Mammary epithelial cell (primary cell): ENCODE measurements at regions of chr2 and their contacts with region 1.

Region 1: GRCh38 chr2:235534678-235535422 is 41.0 kb downstream of the AGAP1 start:
- DNase-seq: no peak
- H3K4me3 ChIP-seq: no peak overlapping the region
- H3K27ac ChIP-seq: no peak overlapping the region
- H3K4me1 ChIP-seq: peaks cover 3% of the 10 kb centered on the region
- H3K27me3 ChIP-seq: no peaks in the 10 kb centered on the region
- CTCF ChIP-seq: no peak

Region 2: DNA sequence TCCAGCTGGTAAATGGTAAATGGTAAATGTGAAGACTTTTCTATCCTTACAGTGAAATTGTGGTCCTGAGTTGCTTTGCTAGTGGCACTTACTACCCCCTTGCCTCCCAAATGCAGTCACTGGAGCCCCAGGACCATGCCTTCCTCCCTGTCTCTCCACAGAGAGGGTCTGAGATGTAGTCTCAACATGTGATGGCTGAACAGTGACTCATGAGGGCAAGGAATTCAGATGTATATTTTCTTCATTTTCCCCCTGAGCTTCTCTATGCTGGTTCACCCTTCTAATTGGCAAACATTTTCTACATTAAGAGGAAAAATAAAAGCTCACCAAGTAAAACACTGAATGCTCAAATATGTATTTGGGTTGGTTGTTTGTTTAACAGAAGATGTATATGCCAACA is 351.1 kb before region 1 on chr2:
- CTCF ChIA-PET with region 1: no interaction called
- dilution Hi-C with region 1: loop called (anchors 10 kb)
- in situ Hi-C with region 1: no loop called
- intact Hi-C with region 1: no loop called
- DNase-seq: no peak
- H3K4me3 ChIP-seq: no peak overlapping the region
- H3K27ac ChIP-seq: no peak overlapping the region
- H3K4me1 ChIP-seq: no peaks in the 10 kb centered on the region
- H3K27me3 ChIP-seq: peaks cover 2% of the 10 kb centered on the region
- CTCF ChIP-seq: no peak

Region 3: DNA sequence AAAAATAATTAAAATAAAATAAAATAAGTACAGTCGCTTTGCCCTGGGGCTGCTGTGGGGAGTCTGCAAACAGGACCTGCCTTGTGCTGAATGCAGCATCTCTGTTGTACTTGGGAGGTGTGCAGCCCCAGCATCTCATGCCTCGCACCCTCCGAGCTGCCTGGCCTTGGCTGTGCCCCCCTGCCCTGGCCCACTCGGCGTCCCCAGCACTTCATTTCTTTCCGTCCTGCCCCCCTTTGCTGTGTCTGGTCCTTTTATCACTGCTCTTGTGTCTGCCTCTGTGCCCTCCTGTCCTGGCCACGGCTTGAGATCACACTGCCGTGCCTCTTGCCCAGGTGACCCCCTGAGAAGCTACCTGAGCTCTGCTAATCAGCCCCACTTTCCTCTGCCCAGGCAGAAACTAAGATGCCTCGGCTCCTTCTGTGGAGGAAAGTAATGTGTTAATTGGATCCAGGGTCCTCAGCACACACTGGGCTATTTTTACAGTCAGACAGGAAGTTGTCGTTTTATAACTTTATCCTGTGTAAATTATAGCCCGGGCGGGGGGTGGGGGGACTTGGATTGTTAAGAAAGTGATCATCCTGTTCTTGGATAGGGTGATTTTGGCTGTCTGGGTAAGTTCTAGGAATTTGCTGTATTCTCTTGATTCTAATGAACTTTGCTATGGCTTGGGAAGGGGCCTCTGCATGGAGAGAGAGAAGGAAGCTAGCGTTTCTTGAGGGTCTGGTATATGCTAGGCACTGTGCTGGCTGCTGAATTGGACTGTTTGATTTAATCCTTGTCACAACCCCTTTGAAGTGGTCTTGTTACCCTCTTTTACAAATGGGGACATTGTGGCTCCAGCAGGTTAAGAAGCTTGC is 28.4 kb after region 1 on chr2:
- CTCF ChIA-PET with region 1: no interaction called
- dilution Hi-C with region 1: no loop called
- in situ Hi-C with region 1: no loop called
- intact Hi-C with region 1: no loop called
- DNase-seq: no peak
- H3K4me3 ChIP-seq: no peak overlapping the region
- H3K27ac ChIP-seq: no peak overlapping the region
- H3K4me1 ChIP-seq: no peaks in the 10 kb centered on the region
- H3K27me3 ChIP-seq: no peaks in the 10 kb centered on the region
- CTCF ChIP-seq: no peak

Region 4: GRCh38 chr2:235621736-235622135 is 86.9 kb after region 1 on chr2:
- CTCF ChIA-PET with region 1: no interaction called
- dilution Hi-C with region 1: loop called (anchors 10 kb)
- in situ Hi-C with region 1: no loop called
- intact Hi-C with region 1: no loop called
- DNase-seq: no peak
- H3K4me3 ChIP-seq: no peak overlapping the region
- H3K27ac ChIP-seq: no peak overlapping the region
- H3K4me1 ChIP-seq: no peaks in the 10 kb centered on the region
- H3K27me3 ChIP-seq: no peaks in the 10 kb centered on the region
- CTCF ChIP-seq: no peak